HEK293 (cell line): ENCODE measurements at regions of chr21 and their contacts with region 1.

Region 1: GRCh38 chr21:38219049-38219628 is 37.7 kb upstream of the KCNJ15 start:
- H3K4me3 ChIP-seq: no peak overlapping the region
- H3K27ac ChIP-seq: no peak overlapping the region
- H3K4me1 ChIP-seq: no peaks in the 10 kb centered on the region
- CTCF ChIP-seq: peak; percentile 75

Region 2: DNA sequence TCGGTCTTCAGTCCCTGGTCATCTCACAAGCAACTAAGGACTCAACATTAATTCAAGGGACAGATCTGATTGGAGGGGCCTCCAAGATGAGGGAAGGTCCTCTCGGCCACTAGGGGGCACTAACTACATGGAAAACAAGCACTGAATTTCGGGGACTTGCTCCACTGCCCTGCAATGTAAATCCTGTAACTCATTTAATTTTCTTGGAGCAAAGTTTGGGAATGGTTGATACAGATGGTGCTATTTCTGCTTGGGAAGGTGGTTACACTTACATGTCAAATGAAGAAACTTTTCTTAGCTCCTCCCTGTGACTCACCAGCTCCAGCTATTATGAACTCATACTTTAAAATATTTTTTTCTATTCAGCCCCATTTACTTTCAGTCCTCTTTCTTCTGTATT is 59.8 kb before region 1 on chr21:
- CTCF ChIA-PET with region 1: interaction called, 15 read pairs
- POLR2A ChIA-PET with region 1: no interaction called
- H3K4me3 ChIP-seq: no peak overlapping the region
- H3K27ac ChIP-seq: no peak overlapping the region
- H3K4me1 ChIP-seq: no peaks in the 10 kb centered on the region
- CTCF ChIP-seq: peak; percentile 37

Region 3: DNA sequence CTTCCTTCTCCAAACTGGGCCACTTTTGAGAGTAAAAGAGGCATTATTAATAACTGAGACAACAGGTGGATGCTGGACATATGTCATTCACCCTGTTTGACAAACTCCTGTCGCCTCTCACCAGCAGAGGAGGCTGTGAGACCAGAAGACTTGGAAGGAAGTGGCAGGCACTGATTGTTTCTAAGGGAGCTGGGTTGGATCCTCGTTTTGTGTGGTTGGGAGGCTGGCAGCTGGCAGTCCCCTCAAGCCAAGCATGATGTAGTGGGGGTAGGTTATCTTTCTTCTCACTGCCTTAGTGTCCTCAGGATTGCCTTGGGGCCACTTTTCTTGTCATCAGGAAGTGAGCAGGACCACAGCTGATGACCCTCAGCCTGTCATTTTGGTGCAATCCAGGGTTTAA is 48.9 kb before region 1 on chr21:
- CTCF ChIA-PET with region 1: interaction called, 10 read pairs
- POLR2A ChIA-PET with region 1: no interaction called
- H3K4me3 ChIP-seq: no peak overlapping the region
- H3K27ac ChIP-seq: no peak overlapping the region
- H3K4me1 ChIP-seq: no peaks in the 10 kb centered on the region
- CTCF ChIP-seq: no peak

Region 4: DNA sequence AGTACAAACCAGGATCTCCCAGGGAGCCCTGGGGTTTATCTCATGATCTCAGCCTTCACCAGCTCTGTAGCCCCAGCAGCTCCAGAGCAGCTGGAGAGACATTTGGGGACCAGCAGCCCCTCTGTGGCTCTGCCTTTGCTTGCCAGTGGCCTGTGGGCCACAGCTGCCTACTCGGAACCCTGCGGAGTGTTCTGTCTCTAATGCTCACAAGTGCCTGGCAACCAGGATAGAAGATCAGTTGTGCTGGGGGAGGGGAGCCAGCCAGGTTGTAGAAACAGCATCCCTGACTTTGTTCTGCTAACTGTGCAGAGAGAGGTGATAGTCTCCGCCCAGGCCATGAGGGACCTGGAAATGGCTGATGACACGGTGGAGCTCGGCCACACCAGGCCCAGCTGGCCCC is 13.2 kb before region 1 on chr21:
- CTCF ChIA-PET with region 1: interaction called, 43 read pairs
- POLR2A ChIA-PET with region 1: no interaction called
- H3K4me3 ChIP-seq: no peak overlapping the region
- H3K27ac ChIP-seq: no peak overlapping the region
- H3K4me1 ChIP-seq: peaks cover 3% of the 10 kb centered on the region; the same call in 1 of the 2 replicates
- CTCF ChIP-seq: no peak

Region 5: GRCh38 chr21:38234395-38235151 is 15.4 kb after region 1 on chr21:
- CTCF ChIA-PET with region 1: interaction called, 13 read pairs
- POLR2A ChIA-PET with region 1: no interaction called
- H3K4me3 ChIP-seq: no peak overlapping the region
- H3K27ac ChIP-seq: no peak overlapping the region
- H3K4me1 ChIP-seq: no peaks in the 10 kb centered on the region
- CTCF ChIP-seq: no peak

Region 6: DNA sequence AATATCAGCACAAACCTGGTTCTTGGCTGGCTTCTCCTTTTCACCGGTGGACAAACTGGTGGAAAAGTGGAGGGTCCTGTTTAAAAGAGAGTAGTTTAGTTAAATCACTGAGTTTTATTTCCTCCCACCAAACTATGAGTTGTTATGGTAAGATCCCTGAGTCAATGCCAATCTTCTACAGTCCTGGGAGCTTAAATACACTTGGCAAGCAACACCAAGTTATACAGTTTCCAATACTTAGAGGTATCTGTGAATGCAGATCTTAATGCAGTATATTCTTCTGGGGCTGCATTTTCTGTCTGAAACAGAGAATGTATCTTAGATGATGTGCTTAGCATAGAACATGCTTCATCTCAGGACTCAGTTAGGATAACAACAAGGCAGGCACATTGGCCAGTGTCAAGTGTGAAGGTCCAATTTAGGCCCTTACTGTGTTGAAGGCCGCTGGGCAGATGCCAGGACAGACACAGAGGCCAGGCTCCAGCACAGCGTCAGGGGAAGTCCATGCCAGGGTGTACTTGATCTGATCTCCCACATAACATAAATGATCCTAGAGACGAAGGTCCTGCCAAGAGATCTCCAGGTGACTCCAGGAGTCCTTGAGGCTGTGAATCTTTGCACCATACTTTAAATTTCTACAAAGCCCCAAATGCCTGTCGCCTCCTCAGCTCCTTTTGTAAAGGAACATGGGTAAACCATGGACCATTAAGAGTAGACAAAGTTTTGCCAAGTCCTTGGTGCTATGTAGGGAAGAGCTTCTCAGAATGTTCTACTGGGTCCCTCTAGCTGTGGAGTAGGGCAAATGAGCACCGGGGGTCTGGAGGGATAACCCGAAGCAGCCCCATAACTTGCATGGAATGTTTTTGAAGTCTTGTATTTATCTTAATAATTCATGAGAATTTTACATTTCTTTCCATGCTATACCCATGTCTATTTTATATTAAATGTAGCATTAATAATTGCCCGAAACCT is 114.4 kb after region 1 on chr21:
- CTCF ChIA-PET with region 1: interaction called, 23 read pairs
- POLR2A ChIA-PET with region 1: no interaction called
- H3K4me3 ChIP-seq: no peak overlapping the region
- H3K27ac ChIP-seq: no peak overlapping the region
- H3K4me1 ChIP-seq: no peaks in the 10 kb centered on the region
- CTCF ChIP-seq: no peak

Region 7: DNA sequence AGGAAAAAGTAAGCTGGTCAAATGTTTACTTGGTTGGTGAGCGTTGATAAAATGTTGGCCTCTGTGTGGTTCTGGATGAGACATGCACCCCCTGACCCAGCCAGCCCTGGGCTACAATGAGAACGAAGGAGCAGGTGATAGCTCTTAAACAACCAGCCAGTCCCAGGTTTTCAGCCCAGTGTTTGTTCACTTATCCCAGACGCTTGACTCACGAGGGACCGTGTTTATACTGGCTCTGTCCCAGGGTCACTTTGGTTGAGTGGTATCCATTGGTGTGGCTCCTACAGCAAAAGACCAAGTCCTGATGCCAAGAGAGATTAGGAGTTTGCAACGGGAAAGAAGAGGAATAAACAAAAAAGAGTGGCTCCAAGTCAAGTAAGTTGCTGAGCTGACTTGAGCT is 124.6 kb after region 1 on chr21:
- CTCF ChIA-PET with region 1: interaction called, 16 read pairs
- POLR2A ChIA-PET with region 1: no interaction called
- H3K4me3 ChIP-seq: no peak overlapping the region
- H3K27ac ChIP-seq: peak overlapping the region; percentile 61; the same call in 1 of the 2 replicates
- H3K4me1 ChIP-seq: peaks cover 23% of the 10 kb centered on the region
- CTCF ChIP-seq: no peak